Gastrocnemius medialis (tissue), 4 donors: ENCODE measurements at regions of chr11 and their contacts with region 1.

Region 1: DNA sequence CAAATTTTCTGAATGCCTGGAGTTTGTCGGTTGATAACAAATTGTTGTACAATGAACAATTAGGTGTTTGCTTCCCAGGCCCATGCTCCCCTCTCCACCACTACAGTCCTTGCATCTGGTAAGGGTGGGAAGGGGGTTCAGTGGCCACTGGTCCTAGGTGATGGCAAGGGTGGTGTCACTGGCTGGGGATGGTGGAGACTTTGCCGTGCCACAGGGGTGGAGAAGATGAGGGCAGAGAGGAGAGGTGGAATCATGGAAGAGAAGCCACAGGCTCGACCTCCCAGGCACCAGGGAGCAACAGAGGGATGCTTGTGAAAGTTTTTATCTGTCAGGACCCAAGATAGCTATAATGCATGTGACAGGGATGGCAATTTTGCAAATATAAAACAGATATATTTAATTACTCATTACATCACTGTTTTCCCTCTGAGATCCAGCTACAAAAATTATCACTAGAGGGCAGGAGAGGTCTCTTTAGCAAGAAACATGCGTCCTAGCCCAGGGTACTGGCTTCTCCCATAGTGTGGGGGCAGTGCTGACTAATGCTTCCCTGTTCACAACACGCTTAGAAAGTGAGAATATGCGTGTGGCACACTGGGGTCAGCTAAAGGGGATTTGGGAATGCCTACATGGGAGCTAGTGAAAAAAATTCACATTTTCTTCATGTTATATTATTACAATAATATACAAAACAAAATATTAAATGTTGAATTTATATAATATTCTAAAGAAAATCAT is 49.0 kb upstream of the AMPD3 start:
- DNase-seq: peak; percentile 80 to 82
- ATAC-seq: peak; percentile 33 to 62
- H3K4me3 ChIP-seq: no peak overlapping the region
- H3K27ac ChIP-seq: peak overlapping the region; percentile 77 to 95 (median 89)
- H3K4me1 ChIP-seq: peaks cover 55 to 56% of the 10 kb centered on the region in 2 donors
- H3K27me3 ChIP-seq: no peaks in the 10 kb centered on the region
- CTCF ChIP-seq: peak; percentile 56 to 81 (median 71)
- POLR2A ChIP-seq: no peak

Region 2: GRCh38 chr11:10490398-10491241 is 84.6 kb after region 1 on chr11:
- in situ Hi-C with region 1: no loop called
- intact Hi-C with region 1: loop called (anchors 1 kb)
- DNase-seq: peak; percentile 95 to 96
- ATAC-seq: peak; percentile 92 to 95
- H3K4me3 ChIP-seq: no peak overlapping the region
- H3K27ac ChIP-seq: peak overlapping the region; percentile 86 to 90 (median 88)
- H3K4me1 ChIP-seq: peaks cover 28 to 29% of the 10 kb centered on the region in 2 donors
- H3K27me3 ChIP-seq: no peaks in the 10 kb centered on the region
- CTCF ChIP-seq: no peak
- POLR2A ChIP-seq: no peak

Region 3: GRCh38 chr11:10540923-10541560 is 135.0 kb after region 1 on chr11 and contains the start of gene RNF141:
- in situ Hi-C with region 1: no loop called
- intact Hi-C with region 1: loop called (anchors 2 kb)
- DNase-seq: peak; percentile 91 to 93
- ATAC-seq: peak; percentile 90 to 93
- H3K4me3 ChIP-seq: peak within 1 kb of the TSS; percentile 89 to 93 (median 92)
- H3K27ac ChIP-seq: peak within 1 kb of the TSS; percentile 91 to 97 (median 94)
- H3K4me1 ChIP-seq: peaks cover 8 to 13% of the 10 kb centered on the region in 2 donors
- H3K27me3 ChIP-seq: no peaks in the 10 kb centered on the region
- CTCF ChIP-seq: peak; percentile 82 to 88 (median 83)
- POLR2A ChIP-seq: peak; percentile 80 to 93
- total RNA-seq, gene RNF141: 16.8 to 38.2 (median 19.0) TPM

Region 4: GRCh38 chr11:10605941-10606381 is 199.9 kb after region 1 on chr11:
- in situ Hi-C with region 1: no loop called
- intact Hi-C with region 1: loop called (anchors 5 kb)
- DNase-seq: peak in 1 of 2 donors; percentile 54
- ATAC-seq: no peak
- H3K4me3 ChIP-seq: no peak overlapping the region
- H3K27ac ChIP-seq: peak overlapping the region in 3 of 4 donors; percentile 30 to 93 (median 36)
- H3K4me1 ChIP-seq: peaks cover 38 to 43% of the 10 kb centered on the region in 2 donors
- H3K27me3 ChIP-seq: no peaks in the 10 kb centered on the region
- CTCF ChIP-seq: no peak
- POLR2A ChIP-seq: no peak

Region 5: GRCh38 chr11:10653926-10654810 is 248.1 kb after region 1 on chr11:
- in situ Hi-C with region 1: loop called in 1 of 4 experiments (anchors 10 kb)
- intact Hi-C with region 1: loop called (anchors 2 kb)
- DNase-seq: no peak
- ATAC-seq: peak; percentile 65 to 88
- H3K4me3 ChIP-seq: no peak overlapping the region
- H3K27ac ChIP-seq: peak overlapping the region in 3 of 4 donors; percentile 9 to 51 (median 36)
- H3K4me1 ChIP-seq: peaks cover 16 to 39% of the 10 kb centered on the region in 2 donors
- H3K27me3 ChIP-seq: no peaks in the 10 kb centered on the region
- CTCF ChIP-seq: peak; percentile 62 to 79 (median 69)
- POLR2A ChIP-seq: no peak

Region 6: GRCh38 chr11:10730151-10730550 is 324.1 kb after region 1 on chr11:
- in situ Hi-C with region 1: loop called (anchors 5 to 10 kb)
- intact Hi-C with region 1: loop called (anchors 1 kb)
- DNase-seq: no peak
- ATAC-seq: no peak
- H3K4me3 ChIP-seq: no peak overlapping the region
- H3K27ac ChIP-seq: no peak overlapping the region
- H3K4me1 ChIP-seq: peaks cover 10% of the 10 kb centered on the region in 2 donors
- H3K27me3 ChIP-seq: no peaks in the 10 kb centered on the region
- CTCF ChIP-seq: no peak
- POLR2A ChIP-seq: no peak

Region 7: DNA sequence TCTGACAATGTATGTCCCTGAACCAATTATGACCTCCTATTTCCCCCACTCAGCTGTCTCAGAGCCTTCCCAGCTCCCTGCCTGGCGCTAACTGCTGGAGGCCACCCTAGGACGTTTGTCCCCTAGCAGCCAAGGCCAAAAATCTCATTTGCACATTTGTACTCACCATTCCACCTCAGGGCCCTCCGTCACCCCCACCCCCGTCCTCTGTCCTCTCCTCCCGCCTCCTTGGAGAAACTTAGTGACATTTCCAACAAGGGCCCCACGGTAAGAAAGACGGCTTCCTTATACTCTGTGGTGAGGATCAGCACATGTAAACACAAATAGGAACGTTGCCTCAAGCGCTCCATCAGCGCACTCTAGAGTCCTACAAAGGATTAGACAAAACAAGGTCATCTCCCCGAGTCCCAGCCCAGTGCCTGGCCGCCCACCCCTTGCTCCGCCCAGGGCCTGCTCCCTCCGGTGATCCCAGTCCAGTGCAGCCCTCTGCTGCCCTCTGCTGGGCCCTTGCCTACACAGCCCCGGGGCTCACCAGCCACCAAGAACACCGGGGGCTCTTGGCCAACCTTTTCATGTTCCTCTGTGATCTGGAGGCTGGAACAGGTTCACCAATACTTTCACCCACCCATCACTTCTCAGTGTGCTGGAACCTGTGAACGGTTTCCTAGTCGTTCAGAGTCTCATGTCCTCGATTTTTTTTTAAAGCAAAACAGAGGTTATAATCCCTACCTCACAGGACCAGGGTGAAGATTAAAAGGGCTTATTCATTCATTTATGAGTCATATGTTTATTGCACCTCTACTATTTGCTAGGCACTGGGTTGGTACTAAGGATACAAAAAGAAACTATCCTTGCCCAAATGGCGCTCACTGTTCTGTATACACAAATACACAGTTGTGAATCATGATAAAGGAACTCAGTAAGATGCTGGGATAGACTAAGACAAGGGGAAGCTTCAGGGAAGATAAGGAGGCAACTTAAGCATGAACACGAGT is 329.8 kb after region 1 on chr11:
- in situ Hi-C with region 1: loop called (anchors 5 to 10 kb)
- intact Hi-C with region 1: loop called (anchors 1 kb)
- DNase-seq: peak; percentile 92 to 94
- ATAC-seq: peak; percentile 94 to 95
- H3K4me3 ChIP-seq: peak overlapping the region in 3 of 4 donors; percentile 19 to 35 (median 30)
- H3K27ac ChIP-seq: peak overlapping the region; percentile 76 to 81 (median 80)
- H3K4me1 ChIP-seq: peaks cover 15 to 20% of the 10 kb centered on the region in 2 donors
- H3K27me3 ChIP-seq: no peaks in the 10 kb centered on the region
- CTCF ChIP-seq: peak; percentile 97 to 99 (median 98)
- POLR2A ChIP-seq: no peak

Region 8: DNA sequence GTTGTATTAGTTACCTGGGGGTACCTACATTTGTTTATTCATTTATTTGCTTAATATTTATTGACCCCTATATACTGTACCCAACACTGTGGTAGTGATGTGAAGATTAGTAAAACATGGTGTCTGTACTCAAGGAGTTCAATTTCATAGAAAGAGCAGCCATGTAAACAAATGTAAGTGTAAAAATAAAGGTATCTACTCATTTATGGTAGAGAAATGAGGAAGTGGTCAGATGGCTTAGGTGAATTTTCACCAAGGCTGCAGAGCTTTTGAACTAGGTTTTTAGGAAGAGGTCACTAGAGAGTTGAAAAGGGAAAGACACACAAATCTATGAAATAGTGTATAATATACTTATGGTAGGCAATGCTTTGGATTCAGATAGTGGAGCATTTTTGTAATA is 356.2 kb after region 1 on chr11:
- in situ Hi-C with region 1: no loop called
- intact Hi-C with region 1: no loop called
- DNase-seq: no peak
- ATAC-seq: no peak
- H3K4me3 ChIP-seq: no peak overlapping the region
- H3K27ac ChIP-seq: no peak overlapping the region
- H3K4me1 ChIP-seq: no peaks in the 10 kb centered on the region
- H3K27me3 ChIP-seq: no peaks in the 10 kb centered on the region
- CTCF ChIP-seq: no peak
- POLR2A ChIP-seq: no peak